ENCODE measurements at regions of chr7 and their contacts with region 1.

Region 1: GRCh38 chr7:23431702-23432199 is 38.5 kb downstream of the IGF2BP3 start:
- DNase-seq: no peak
- H3K4me3 ChIP-seq: peak overlapping the region; percentile 25
- H3K27ac ChIP-seq: peak overlapping the region; percentile 30
- H3K4me1 ChIP-seq: peaks cover 35% of the 10 kb centered on the region
- CTCF ChIP-seq: no peak

Region 2: DNA sequence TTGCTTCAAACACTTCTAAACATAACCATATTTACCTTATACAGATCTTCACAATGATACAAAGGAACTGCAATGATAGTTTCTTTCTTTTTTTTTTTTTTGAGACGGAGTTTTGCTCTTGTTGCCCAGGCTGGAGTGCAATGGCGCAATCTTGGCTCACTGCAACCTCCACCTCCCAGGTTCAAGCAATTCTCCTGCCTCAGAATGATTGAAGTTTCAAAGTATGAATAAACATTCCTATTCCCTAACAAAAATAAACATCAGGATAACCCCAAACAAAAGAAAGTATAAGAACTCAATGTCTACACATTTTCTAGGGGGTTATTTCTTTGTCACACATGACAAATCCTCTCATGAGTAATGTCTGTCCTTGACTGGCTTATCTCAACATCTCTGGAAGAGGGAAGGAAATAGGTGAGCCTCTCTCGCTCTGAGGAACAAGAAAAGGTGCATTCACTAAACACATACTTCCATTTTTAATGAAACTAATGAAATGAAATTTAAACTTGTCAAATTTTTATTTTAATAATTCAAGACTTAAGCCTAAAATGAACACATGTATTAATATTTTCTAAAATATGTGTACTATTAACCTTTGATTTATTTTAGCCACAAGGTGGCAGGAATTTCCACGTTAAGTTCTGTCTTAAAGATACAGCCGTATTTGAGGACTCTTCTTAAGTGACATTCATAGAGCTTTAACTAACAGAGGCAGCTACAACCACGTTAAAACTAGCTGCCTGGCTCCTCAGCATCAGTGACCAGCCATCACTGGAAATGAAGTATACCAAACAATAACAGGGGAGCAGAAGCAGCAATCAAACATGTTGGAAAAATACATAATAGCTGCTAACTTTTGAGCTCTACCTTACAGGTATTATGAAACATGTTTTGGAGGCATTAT is 74.3 kb before region 1 on chr7:
- CTCF ChIA-PET with region 1: interaction called, 8 read pairs
- POLR2A ChIA-PET with region 1: interaction called, 11 read pairs
- intact Hi-C with region 1: loop called (anchors 2 kb)
- DNase-seq: peak; percentile 77
- H3K4me3 ChIP-seq: no peak overlapping the region
- H3K27ac ChIP-seq: peak overlapping the region; percentile 17
- H3K4me1 ChIP-seq: peaks cover 37% of the 10 kb centered on the region
- CTCF ChIP-seq: peak; percentile 87

Region 3: GRCh38 chr7:23385140-23385539 is 46.6 kb before region 1 on chr7:
- CTCF ChIA-PET with region 1: no interaction called
- POLR2A ChIA-PET with region 1: no interaction called
- intact Hi-C with region 1: no loop called
- DNase-seq: no peak
- H3K4me3 ChIP-seq: no peak overlapping the region
- H3K27ac ChIP-seq: no peak overlapping the region
- H3K4me1 ChIP-seq: peaks cover 16% of the 10 kb centered on the region
- CTCF ChIP-seq: no peak

Region 4: DNA sequence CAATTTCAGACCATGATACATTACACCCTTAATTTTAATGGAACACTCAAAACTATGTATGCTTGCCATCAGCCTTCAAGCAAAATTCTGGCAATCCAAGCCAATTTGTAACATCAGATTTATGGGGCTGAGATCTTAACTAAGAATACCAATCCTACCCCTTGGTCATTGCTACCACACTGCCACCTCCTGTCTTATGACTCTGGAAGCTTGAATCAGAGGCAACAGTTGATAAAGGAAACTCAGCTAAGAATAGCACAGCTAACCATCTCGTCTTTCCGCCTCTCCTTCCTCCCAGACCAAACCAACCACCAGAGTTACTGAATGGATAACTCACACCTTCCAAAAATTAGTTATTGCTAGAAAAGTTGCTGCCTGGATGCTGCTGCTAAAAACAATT is 31.1 kb after region 1 on chr7:
- CTCF ChIA-PET with region 1: no interaction called
- POLR2A ChIA-PET with region 1: interaction called, 10 read pairs
- intact Hi-C with region 1: loop called (anchors 1 kb)
- DNase-seq: peak; percentile 33
- H3K4me3 ChIP-seq: no peak overlapping the region
- H3K27ac ChIP-seq: no peak overlapping the region
- H3K4me1 ChIP-seq: peaks cover 48% of the 10 kb centered on the region
- CTCF ChIP-seq: peak; percentile 61

Region 5: DNA sequence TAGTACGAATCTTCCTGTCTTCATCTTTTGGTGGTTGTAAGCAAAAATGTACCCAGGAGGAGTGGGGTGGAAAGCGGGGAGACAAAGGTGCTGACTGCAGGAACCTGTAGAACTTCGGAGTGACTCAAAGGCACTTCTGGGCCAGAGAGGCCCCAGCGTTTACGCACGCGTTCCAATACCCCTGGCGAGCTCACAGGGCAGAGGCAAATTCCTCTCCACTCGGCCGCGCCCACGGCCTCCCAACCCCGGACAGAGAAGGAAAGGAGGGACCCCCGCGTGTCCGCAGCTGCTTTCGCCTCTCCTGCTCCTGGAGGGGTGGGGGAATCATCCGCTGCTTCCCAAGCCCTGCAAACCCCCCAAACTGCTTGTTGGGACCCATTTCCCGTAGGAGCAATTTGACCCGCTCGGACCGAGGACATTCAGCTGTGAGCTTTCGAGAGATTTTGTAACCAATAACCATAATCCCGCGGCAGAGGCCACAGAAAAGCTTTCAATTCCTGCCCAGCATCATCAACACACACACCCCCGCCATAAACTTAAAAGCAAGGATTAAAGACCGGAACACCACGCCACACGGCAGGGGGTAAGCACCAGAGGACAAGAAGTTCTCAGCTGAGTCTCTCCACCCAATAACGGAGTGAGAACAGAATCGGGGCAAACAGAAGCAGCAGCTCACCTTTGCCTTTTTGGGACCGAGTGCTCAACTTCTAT is 36.2 kb after region 1 on chr7:
- CTCF ChIA-PET with region 1: no interaction called
- POLR2A ChIA-PET with region 1: interaction called, 10 read pairs
- intact Hi-C with region 1: loop called (anchors 1 kb)
- DNase-seq: peak; percentile 70
- H3K4me3 ChIP-seq: peak overlapping the region; percentile 85
- H3K27ac ChIP-seq: peak overlapping the region; percentile 90
- H3K4me1 ChIP-seq: peaks cover 44% of the 10 kb centered on the region
- CTCF ChIP-seq: no peak

Region 6: DNA sequence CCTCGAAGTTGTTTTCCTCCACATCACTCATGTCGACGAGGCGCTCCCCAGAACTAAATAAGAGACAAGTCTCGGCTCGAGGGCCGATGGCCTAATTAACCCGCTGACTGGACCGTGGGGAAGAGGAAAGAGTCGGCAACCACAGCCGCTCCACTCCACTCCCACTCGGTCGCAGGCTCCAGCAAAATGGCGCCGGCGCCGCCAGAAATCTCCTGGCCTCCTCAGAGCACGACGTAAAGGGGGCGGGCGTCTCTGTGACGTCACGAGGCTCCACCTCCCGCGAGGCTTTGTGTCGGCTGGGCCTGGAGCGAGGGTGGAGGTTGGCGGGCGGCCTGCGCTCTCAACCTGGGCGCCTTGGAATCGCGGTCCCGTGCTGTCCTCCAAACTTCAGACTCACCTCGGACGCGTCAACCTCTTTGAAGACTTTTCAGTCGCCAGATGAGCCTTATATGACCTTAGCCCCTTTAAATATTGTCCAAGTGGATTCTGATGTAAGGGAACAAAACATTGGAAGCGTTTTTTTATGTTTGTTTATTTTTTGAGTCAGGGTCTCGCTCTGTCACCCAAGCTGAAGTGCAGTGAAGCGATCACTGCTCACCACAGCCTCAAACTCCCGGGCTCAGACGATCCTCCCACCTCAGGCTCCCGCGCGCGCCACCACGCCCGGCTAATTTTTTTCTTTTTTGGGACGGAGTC is 100.2 kb after region 1 on chr7 and contains the start of gene TRA2A:
- CTCF ChIA-PET with region 1: no interaction called
- POLR2A ChIA-PET with region 1: interaction called, 5 read pairs
- intact Hi-C with region 1: loop called (anchors 5 kb)
- DNase-seq: peak; percentile 96
- H3K4me3 ChIP-seq: peak within 1 kb of the TSS; percentile 98
- H3K27ac ChIP-seq: peak within 1 kb of the TSS; percentile 94
- H3K4me1 ChIP-seq: peaks cover 45% of the 10 kb centered on the region
- CTCF ChIP-seq: 0 out of 2 replicates have a peak, but pooled peaks have one; percentile 14
- total RNA-seq, gene TRA2A: 41.4 and 44.9 TPM in 2 replicates

Measured in OCI-LY7 (cell line).